Activated CD8-positive, alpha-beta T cell treated with anti-CD3 and anti-CD28 coated beads for 36 hours (primary cell): ENCODE measurements at regions of chr3 and their contacts with region 1.

Region 1: DNA sequence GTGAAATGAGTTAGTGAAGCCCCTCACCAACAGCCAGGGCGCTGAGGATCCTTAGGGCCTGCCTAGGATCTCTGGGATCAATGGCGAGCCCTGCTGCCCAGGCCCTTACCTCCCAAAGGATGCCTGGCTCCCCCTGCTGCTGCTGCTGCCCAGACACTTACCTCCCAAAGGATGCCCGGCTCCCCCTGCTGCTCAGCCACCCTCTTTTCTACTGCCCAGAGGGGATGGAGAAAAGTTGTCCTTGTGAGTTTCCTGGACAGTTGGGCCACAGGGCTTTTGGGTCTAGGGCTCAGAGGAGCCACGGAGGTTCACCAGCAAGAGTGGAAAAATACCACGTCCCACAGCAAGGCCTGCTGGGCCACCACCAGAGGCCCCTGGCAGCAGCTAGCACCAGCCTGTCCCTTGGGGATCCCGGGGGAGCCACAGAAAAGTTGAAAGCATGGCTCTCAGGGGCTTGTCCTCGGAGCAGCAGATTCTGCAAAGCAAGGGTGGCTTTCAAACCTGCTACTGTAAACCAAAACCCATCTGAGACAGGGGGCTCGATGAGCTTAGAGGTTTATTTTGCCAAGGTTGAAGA is 59.4 kb downstream of the SLC6A6 start:
- DNase-seq: peak; percentile 54
- ATAC-seq: peak; percentile 48
- H3K4me3 Mint-ChIP-seq: no peak overlapping the region
- H3K27ac Mint-ChIP-seq: peak overlapping the region; percentile 35
- H3K4me1 Mint-ChIP-seq: peaks cover 27% of the 10 kb centered on the region
- H3K27me3 Mint-ChIP-seq: no peaks in the 10 kb centered on the region
- CTCF ChIP-seq: no peak

Region 2: GRCh38 chr3:14261229-14261628 is 200.6 kb before region 1 on chr3:
- CTCF ChIA-PET with region 1: interaction called, 34 read pairs
- POLR2A ChIA-PET with region 1: no interaction called
- intact Hi-C with region 1: no loop called
- DNase-seq: peak; percentile 81
- ATAC-seq: peak; percentile 65
- H3K4me3 Mint-ChIP-seq: no peak overlapping the region
- H3K27ac Mint-ChIP-seq: no peak overlapping the region
- H3K4me1 Mint-ChIP-seq: no peaks in the 10 kb centered on the region
- H3K27me3 Mint-ChIP-seq: no peaks in the 10 kb centered on the region
- CTCF ChIP-seq: peak; percentile 97